HepG2 (cell line): ENCODE measurements at regions of chr10 and their contacts with region 1.

Region 1: DNA sequence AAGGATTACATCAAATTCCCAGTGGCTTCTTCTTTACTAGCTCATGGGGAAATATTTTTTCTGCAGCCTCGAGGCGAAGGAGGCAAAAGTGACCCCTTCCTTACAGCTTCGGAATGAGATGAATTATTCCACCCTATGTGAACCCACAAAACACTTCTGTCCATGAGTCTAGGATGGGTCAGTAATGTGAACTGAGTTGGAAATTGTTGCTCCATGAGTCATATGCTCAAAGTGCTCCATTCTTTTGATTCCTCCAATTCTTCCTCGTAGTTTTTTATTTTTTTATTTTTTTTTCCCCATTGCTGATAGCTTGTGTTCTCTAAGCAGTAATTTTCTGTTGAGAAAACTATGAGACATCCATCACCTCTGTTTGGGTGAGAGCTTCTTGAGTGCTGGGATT is 31.7 kb upstream of the FAM204A start:
- DNase-seq: peak; percentile 7
- ATAC-seq: no peak
- H3K4me3 ChIP-seq: no peak overlapping the region
- H3K27ac ChIP-seq: no peak overlapping the region
- H3K4me1 ChIP-seq: no peaks in the 10 kb centered on the region
- H3K27me3 ChIP-seq: no peaks in the 10 kb centered on the region
- CTCF ChIP-seq: no peak
- EP300 ChIP-seq: no peak
- POLR2A ChIP-seq: no peak
- RAD21 ChIP-seq: no peak

Region 2: DNA sequence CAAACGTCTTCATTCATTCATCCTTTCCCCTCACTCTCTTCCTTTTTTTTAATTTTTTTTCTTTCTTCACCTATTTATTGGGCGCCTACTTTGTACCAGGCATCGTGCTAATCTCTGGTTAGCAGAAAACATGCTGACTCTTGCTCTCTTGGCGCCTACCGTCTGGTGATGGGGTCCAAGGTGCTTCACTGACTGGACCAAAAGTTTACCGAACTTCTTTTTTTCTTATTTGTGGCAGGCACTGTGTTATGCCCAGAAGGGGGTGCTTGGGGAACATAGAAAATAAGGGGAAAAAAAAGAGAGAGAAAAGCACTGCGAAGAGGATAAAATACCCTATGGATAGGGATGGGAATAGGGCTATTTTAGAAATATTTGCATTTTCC is 31.2 kb before region 1 on chr10:
- CTCF ChIA-PET with region 1: no interaction called
- POLR2A ChIA-PET with region 1: no interaction called
- in situ Hi-C with region 1: no loop called
- intact Hi-C with region 1: loop called (anchors 1 kb)
- DNase-seq: peak; percentile 5
- ATAC-seq: peak; percentile 7; the same call in 2 of the 3 replicates
- H3K4me3 ChIP-seq: peak overlapping the region; percentile 77 to 84 (median 82); a peak in 5 of 6 replicates
- H3K27ac ChIP-seq: no peak overlapping the region
- H3K4me1 ChIP-seq: peaks cover 24% of the 10 kb centered on the region
- H3K27me3 ChIP-seq: peaks cover 0 to 3% of the 10 kb centered on the region in 2 experiments; a peak in 1 of 5 replicates
- CTCF ChIP-seq: no peak
- EP300 ChIP-seq: no peak
- POLR2A ChIP-seq: no peak
- RAD21 ChIP-seq: no peak

Region 3: GRCh38 chr10:118362103-118362502 is 11.7 kb before region 1 on chr10:
- CTCF ChIA-PET with region 1: no interaction called
- POLR2A ChIA-PET with region 1: no interaction called
- in situ Hi-C with region 1: no loop called
- intact Hi-C with region 1: no loop called
- DNase-seq: no peak
- ATAC-seq: no peak
- H3K4me3 ChIP-seq: no peak overlapping the region
- H3K27ac ChIP-seq: no peak overlapping the region
- H3K4me1 ChIP-seq: no peaks in the 10 kb centered on the region
- H3K27me3 ChIP-seq: no peaks in the 10 kb centered on the region
- CTCF ChIP-seq: no peak
- EP300 ChIP-seq: no peak
- POLR2A ChIP-seq: no peak
- RAD21 ChIP-seq: no peak